Right ventricle myocardium superior (tissue), 1 donor: ENCODE measurements at regions of chr1 and their contacts with region 1.

Region 1: DNA sequence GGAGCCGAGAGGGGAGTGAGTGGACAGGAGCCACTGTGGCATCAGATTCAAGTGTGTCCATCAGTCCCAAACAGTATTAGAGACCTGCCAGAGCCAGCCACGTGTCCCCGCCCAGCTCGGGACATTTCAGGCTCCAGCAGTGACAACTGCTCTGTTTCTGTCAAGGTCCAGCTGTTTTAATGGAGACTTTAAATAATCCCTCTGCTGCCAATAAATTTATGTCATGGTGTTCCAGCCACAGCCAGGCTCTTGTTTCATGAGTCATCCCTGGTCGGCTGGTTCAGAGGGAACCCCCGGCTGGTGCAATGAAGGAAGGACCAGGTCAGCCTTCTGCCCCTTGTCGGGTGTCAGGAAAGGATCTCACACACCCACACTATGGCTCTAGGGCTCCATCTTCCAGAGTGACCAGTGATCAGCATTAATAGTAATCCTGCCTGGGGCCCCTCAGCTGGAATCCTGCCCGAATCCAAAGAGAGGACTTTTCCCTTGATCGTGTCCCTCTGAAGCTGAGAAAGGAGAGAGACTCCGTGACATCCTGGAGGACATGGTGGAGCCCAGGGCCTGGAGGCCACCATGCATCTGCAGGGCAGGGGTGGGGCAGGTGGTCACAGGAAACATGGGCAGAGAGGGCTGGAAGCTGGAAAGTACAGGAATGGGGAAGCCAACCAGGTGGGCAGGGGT is 197.3 kb downstream of the MATN1 start:
- DNase-seq: peak; percentile 57
- ATAC-seq: peak; percentile 8

Region 2: GRCh38 chr1:30684881-30685795 is 159.0 kb after region 1 on chr1:
- intact Hi-C with region 1: loop called (anchors 10 kb)
- DNase-seq: no peak
- ATAC-seq: peak; percentile 76